Heart right ventricle (tissue), 16 donors: ENCODE measurements at regions of chr11 and their contacts with region 1.

Region 1: GRCh38 chr11:133476570-133477255 is 55.6 kb downstream of the OPCML start:
- DNase-seq: no peak
- ATAC-seq: no peak
- H3K4me3 ChIP-seq: no peak overlapping the region
- H3K27ac ChIP-seq: no peak overlapping the region
- H3K4me1 ChIP-seq: no peaks in the 10 kb centered on the region
- H3K27me3 ChIP-seq: peaks cover 0 to 9% (median 3%) of the 10 kb centered on the region in 7 donors
- CTCF ChIP-seq: no peak

Region 2: GRCh38 chr11:132540581-132540980 is 936.1 kb before region 1 on chr11:
- intact Hi-C with region 1: loop called in 1 of 10 experiments (anchors 5 kb)
- DNase-seq: no peak
- ATAC-seq: peak in 2 of 8 donors; percentile 60 to 67
- H3K4me3 ChIP-seq: no peak overlapping the region
- H3K27ac ChIP-seq: no peak overlapping the region
- H3K4me1 ChIP-seq: peaks cover 0 to 7% (median 0%) of the 10 kb centered on the region in 9 donors
- H3K27me3 ChIP-seq: no peaks in the 10 kb centered on the region
- CTCF ChIP-seq: no peak